ENCODE measurements at regions of chr6 and their contacts with region 1.

Region 1: DNA sequence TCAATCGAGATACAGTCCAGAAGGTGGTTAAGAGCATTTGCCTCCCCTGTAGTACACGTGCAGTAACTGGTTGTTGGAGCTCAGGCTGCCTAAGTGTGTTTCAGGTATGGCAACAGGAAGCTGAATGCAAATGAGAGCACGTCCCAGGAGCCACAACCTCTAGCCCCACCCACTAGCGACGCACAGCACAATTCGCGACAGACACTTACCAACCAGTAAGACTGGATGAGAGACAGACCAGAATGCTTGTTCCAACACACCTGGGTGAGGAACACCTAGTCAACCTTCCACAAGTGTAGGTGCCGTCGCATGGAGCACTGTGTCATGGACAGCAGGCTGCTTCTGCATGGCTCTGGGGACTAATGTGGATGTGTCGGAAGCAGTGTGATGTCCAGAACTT is 7.2 kb upstream of the SERPINB1 start:
- DNase-seq: no peak
- ATAC-seq: peak; percentile 13 to 53
- H3K4me3 ChIP-seq: no peak overlapping the region
- H3K27ac ChIP-seq: no peak overlapping the region
- H3K4me1 ChIP-seq: peaks cover 40% of the 10 kb centered on the region
- H3K27me3 ChIP-seq: no peaks in the 10 kb centered on the region
- CTCF ChIP-seq: no peak

Region 2: DNA sequence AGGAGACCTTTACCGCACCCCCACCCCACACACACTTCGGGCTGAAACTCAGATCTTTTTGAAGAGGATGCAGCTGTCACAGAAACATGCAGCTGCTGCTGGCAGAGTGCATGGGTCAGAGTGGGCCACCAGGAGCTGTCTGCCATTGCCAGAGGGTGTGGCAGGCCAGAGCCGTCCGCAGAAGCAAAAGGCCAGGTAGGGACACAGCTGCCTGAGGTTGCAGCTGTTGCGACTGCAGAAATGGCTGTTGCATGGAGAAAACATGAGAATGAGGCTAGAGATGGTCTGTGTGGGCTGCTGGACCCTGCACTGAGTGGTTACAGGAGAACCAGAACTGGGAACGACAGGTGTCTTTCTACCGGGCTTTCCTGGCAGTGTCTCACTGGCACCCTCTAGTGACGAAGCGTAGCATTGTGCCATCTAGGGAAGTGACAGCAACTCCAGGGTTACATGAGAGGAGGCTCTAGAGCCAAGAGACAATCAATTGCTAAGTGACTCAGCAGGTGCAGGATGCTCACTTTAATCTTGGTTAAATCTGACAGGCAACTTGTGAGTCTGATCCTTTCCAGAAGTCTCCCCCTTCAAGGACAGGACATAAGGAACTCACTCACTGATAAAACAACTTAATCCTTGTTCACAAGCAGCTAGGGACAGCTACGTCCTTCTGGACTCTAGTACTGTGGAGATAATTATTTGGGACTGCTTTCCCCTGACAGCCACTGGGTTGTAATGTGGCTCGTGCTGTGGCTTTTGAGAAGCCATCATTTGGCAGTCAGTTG is 83.3 kb after region 1 on chr6:
- intact Hi-C with region 1: loop called (anchors 5 kb)
- DNase-seq: peak; percentile 76
- ATAC-seq: peak; percentile 97 to 98
- H3K4me3 ChIP-seq: peak overlapping the region; percentile 27
- H3K27ac ChIP-seq: no peak overlapping the region
- H3K4me1 ChIP-seq: peaks cover 10% of the 10 kb centered on the region
- H3K27me3 ChIP-seq: no peaks in the 10 kb centered on the region
- CTCF ChIP-seq: peak; percentile 94

Region 3: GRCh38 chr6:3068329-3069214 is 219.7 kb after region 1 on chr6 and contains the start of gene RIPK1:
- intact Hi-C with region 1: no loop called
- DNase-seq: peak; percentile 96
- ATAC-seq: peak; percentile 94 to 95
- H3K4me3 ChIP-seq: peak within 1 kb of the TSS; percentile 89
- H3K27ac ChIP-seq: peak within 1 kb of the TSS; percentile 100
- H3K4me1 ChIP-seq: peaks cover 46% of the 10 kb centered on the region
- H3K27me3 ChIP-seq: no peaks in the 10 kb centered on the region
- CTCF ChIP-seq: peak; percentile 32
- total RNA-seq, gene RIPK1: 26.3 TPM

Measured in lower lobe of right lung (tissue), 2 donors.